Caco-2 (cell line): ENCODE measurements at regions of chr12 and their contacts with region 1.

Region 1: GRCh38 chr12:81257947-81258551 is 180.2 kb downstream of the ACSS3 start:
- DNase-seq: peak in 1 of 2 experiments; percentile 64
- H3K4me3 ChIP-seq: no peak overlapping the region
- H3K4me3 Mint-ChIP-seq: no peak overlapping the region
- H3K27ac Mint-ChIP-seq: no peak overlapping the region
- H3K4me1 ChIP-seq: peaks cover 7% of the 10 kb centered on the region; the same call in 1 of the 2 replicates
- H3K4me1 Mint-ChIP-seq: no peaks in the 10 kb centered on the region
- H3K27me3 ChIP-seq: no peaks in the 10 kb centered on the region
- H3K27me3 Mint-ChIP-seq: no peaks in the 10 kb centered on the region
- CTCF ChIP-seq: peak; percentile 52 to 63

Region 2: GRCh38 chr12:80632835-80633234 is 625.2 kb before region 1 on chr12:
- CTCF ChIA-PET with region 1: interaction called, 8 read pairs
- POLR2A ChIA-PET with region 1: no interaction called
- intact Hi-C with region 1: loop called (anchors 10 kb)
- DNase-seq: peak; percentile 37 to 41
- H3K4me3 ChIP-seq: no peak overlapping the region
- H3K4me3 Mint-ChIP-seq: no peak overlapping the region
- H3K27ac Mint-ChIP-seq: no peak overlapping the region
- H3K4me1 ChIP-seq: no peaks in the 10 kb centered on the region
- H3K4me1 Mint-ChIP-seq: no peaks in the 10 kb centered on the region
- H3K27me3 ChIP-seq: no peaks in the 10 kb centered on the region
- H3K27me3 Mint-ChIP-seq: peaks cover 12% of the 10 kb centered on the region
- CTCF ChIP-seq: peak; percentile 39 to 48

Region 3: GRCh38 chr12:80837348-80837985 is 420.6 kb before region 1 on chr12:
- CTCF ChIA-PET with region 1: interaction called, 17 read pairs
- POLR2A ChIA-PET with region 1: interaction called, 3 read pairs
- intact Hi-C with region 1: loop called (anchors 1 kb)
- DNase-seq: peak; percentile 42 to 49
- H3K4me3 ChIP-seq: no peak overlapping the region
- H3K4me3 Mint-ChIP-seq: no peak overlapping the region
- H3K27ac Mint-ChIP-seq: no peak overlapping the region
- H3K4me1 ChIP-seq: peaks cover 21% of the 10 kb centered on the region
- H3K4me1 Mint-ChIP-seq: peaks cover 14% of the 10 kb centered on the region
- H3K27me3 ChIP-seq: no peaks in the 10 kb centered on the region
- H3K27me3 Mint-ChIP-seq: no peaks in the 10 kb centered on the region
- CTCF ChIP-seq: peak; percentile 56 to 79

Region 4: GRCh38 chr12:81010641-81011040 is 247.4 kb before region 1 on chr12:
- CTCF ChIA-PET with region 1: no interaction called
- POLR2A ChIA-PET with region 1: no interaction called
- intact Hi-C with region 1: loop called (anchors 10 kb)
- DNase-seq: no peak
- H3K4me3 ChIP-seq: no peak overlapping the region
- H3K4me3 Mint-ChIP-seq: no peak overlapping the region
- H3K27ac Mint-ChIP-seq: no peak overlapping the region
- H3K4me1 ChIP-seq: no peaks in the 10 kb centered on the region
- H3K4me1 Mint-ChIP-seq: no peaks in the 10 kb centered on the region
- H3K27me3 ChIP-seq: no peaks in the 10 kb centered on the region
- H3K27me3 Mint-ChIP-seq: no peaks in the 10 kb centered on the region
- CTCF ChIP-seq: no peak

Region 5: GRCh38 chr12:81147292-81147919 is 110.6 kb before region 1 on chr12:
- CTCF ChIA-PET with region 1: interaction called, 8 read pairs
- POLR2A ChIA-PET with region 1: no interaction called
- intact Hi-C with region 1: loop called (anchors 1 kb)
- DNase-seq: peak; percentile 49 to 50
- H3K4me3 ChIP-seq: no peak overlapping the region
- H3K4me3 Mint-ChIP-seq: peak overlapping the region; percentile 30
- H3K27ac Mint-ChIP-seq: peak overlapping the region; percentile 65
- H3K4me1 ChIP-seq: peaks cover 45% of the 10 kb centered on the region
- H3K4me1 Mint-ChIP-seq: peaks cover 23% of the 10 kb centered on the region
- H3K27me3 ChIP-seq: no peaks in the 10 kb centered on the region
- H3K27me3 Mint-ChIP-seq: no peaks in the 10 kb centered on the region
- CTCF ChIP-seq: no peak